ENCODE measurements at regions of chr11 and their contacts with region 1.

Region 1: DNA sequence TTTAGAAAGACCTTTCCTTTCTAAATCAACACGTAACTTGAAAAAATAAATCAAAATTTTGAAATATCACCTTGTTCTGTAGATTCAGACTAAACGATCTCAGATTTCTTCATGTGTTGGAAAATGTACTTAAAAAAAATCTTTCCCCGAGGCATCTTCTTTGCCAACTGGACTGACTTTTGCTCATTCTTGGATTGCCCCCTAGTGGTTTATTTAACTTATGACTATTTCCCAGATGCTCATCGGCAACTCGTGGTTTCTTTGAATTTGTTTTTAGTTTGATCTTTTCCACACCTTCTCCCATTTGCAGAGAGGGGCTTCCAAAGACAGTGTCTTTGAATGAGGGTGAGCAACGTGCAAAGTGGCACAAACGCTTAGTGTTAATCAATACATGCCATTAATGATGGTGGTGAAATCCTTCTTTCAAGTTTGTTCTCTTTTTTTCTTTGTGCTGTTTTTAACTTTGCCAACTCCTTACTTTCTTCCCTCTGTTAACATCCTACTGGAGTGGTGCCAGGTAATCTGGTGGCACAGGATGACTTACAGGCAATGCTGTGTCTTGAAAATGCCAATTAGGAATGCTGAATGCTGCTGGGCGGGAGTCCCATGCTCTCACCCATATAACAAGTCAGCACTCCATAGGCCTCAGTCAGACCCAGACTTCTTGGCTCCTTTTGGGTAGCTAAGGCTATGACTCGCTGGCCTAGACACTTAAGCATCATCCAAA is 18.3 kb downstream of the PRSS23 start:
- DNase-seq: no peak

Region 2: GRCh38 chr11:86608251-86608799 is 210.3 kb before region 1 on chr11:
- intact Hi-C with region 1: loop called (anchors 5 kb)
- DNase-seq: no peak

Region 3: GRCh38 chr11:86681483-86681756 is 137.2 kb before region 1 on chr11:
- intact Hi-C with region 1: loop called (anchors 5 kb)
- DNase-seq: no peak